ENCODE measurements at regions of chr17 and their contacts with region 1.

Region 1: GRCh38 chr17:48441231-48441711 is 11.3 kb upstream of the SKAP1 start:
- DNase-seq: peak; percentile 48
- H3K4me3 Mint-ChIP-seq: peak overlapping the region; percentile 7
- H3K27ac Mint-ChIP-seq: peak overlapping the region; percentile 88
- H3K4me1 Mint-ChIP-seq: peaks cover 92% of the 10 kb centered on the region
- H3K27me3 Mint-ChIP-seq: no peaks in the 10 kb centered on the region

Region 2: GRCh38 chr17:48392857-48393256 is 48.4 kb before region 1 on chr17:
- CTCF ChIA-PET with region 1: interaction called, 3 read pairs
- POLR2A ChIA-PET with region 1: no interaction called
- intact Hi-C with region 1: loop called (anchors 5 kb)
- DNase-seq: no peak
- H3K4me3 Mint-ChIP-seq: no peak overlapping the region
- H3K27ac Mint-ChIP-seq: no peak overlapping the region
- H3K4me1 Mint-ChIP-seq: peaks cover 45% of the 10 kb centered on the region
- H3K27me3 Mint-ChIP-seq: no peaks in the 10 kb centered on the region

Region 3: DNA sequence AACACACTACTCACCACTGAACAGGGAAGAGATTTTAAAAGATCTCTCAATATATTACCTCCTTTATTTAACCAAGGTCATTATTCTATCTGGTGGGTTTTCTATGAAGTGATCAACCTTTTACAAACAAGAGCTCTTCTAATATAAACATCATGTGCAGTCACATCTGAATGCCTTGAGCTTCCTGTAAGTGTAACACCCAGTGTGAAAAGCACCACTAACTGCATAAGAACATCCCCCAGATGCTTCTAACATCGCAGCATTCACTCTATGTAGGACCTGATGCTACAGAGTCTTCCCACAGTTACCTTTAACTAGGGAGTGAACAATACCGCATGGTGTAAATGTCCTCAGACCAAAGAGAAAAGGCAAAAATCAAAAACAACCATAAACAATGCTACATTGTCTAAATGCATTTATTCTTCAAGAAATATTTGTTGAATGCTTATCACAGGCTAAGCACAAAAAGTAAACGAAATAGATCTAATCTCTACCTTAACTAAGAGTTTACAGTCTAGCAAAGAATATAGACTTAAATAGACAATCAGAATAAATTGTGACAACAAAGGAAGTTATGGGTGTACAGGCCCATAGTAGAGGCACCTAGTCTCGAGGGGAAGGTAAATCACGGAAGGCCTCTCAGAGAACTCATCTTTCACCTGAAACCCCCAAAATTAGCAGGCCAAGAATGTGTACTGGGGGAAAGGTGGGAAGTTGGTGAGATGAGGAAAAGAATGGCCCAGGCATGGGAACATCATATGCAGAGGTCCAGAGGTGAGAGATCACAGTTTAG is 27.5 kb before region 1 on chr17:
- CTCF ChIA-PET with region 1: interaction called, 3 read pairs
- POLR2A ChIA-PET with region 1: interaction called, 4 read pairs
- intact Hi-C with region 1: loop called (anchors 1 kb)
- DNase-seq: no peak
- H3K4me3 Mint-ChIP-seq: peak overlapping the region; percentile 18
- H3K27ac Mint-ChIP-seq: peak overlapping the region; percentile 91
- H3K4me1 Mint-ChIP-seq: peaks cover 91% of the 10 kb centered on the region
- H3K27me3 Mint-ChIP-seq: no peaks in the 10 kb centered on the region

Region 4: DNA sequence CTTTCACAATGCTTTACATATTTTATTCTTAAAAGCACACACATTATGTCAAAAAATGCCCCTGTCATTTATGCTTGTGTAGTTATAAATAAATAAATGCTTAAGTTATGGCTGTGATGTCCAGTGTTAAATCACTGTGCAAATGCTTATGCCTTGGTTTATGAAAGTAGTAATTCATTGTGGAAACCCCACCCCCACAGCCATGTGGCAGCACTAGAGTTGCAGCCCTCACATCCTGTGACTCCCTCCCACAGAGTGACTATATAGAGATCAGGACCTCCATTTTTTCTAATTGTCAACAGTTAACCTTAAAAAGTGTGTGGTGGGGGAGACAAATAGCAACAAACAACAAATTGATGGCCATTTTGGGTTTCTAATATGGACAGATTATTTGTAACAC is 13.7 kb before region 1 on chr17:
- CTCF ChIA-PET with region 1: interaction called, 5 read pairs
- POLR2A ChIA-PET with region 1: interaction called, 7 read pairs
- intact Hi-C with region 1: loop called (anchors 1 kb)
- DNase-seq: peak; percentile 81
- H3K4me3 Mint-ChIP-seq: peak overlapping the region; percentile 99
- H3K27ac Mint-ChIP-seq: peak overlapping the region; percentile 98
- H3K4me1 Mint-ChIP-seq: peaks cover 67% of the 10 kb centered on the region
- H3K27me3 Mint-ChIP-seq: no peaks in the 10 kb centered on the region

Region 5: GRCh38 chr17:48555258-48556228 is 114.3 kb after region 1 on chr17:
- CTCF ChIA-PET with region 1: no interaction called
- POLR2A ChIA-PET with region 1: no interaction called
- intact Hi-C with region 1: no loop called
- DNase-seq: no peak
- H3K4me3 Mint-ChIP-seq: peak overlapping the region; percentile 80
- H3K27ac Mint-ChIP-seq: peak overlapping the region; percentile 60
- H3K4me1 Mint-ChIP-seq: peaks cover 6% of the 10 kb centered on the region
- H3K27me3 Mint-ChIP-seq: peaks cover 6% of the 10 kb centered on the region

Measured in activated CD4-positive, alpha-beta memory T cell treated with anti-CD3 and anti-CD28 coated beads for 36 hours (primary cell).